Posterior vena cava (tissue), 2 donors: ENCODE measurements at regions of chr13 and their contacts with region 1.

Region 1: DNA sequence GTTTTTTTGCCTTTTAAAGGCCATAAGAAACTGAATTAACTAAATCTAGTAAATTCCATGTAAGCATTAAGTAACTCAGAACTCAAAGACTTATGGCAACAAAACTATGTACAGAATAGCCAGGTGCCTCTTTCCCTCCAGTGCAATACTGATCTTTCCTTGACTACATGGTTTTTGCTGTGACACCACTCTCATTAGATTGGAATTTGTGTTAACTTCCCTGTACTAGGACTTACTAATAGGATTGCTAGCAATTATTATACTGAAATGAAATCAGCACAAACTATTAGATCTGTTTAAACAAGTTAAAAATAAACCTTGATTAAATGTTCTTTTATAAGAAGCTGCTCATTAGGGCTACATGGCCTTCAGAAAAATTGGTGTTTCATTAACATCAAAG is 96.3 kb downstream of the DACH1 start:
- DNase-seq: no peak

Region 2: GRCh38 chr13:71701741-71702140 is 69.0 kb before region 1 on chr13:
- intact Hi-C with region 1: loop called in 1 of 2 experiments (anchors 2 kb)
- DNase-seq: no peak

Region 3: DNA sequence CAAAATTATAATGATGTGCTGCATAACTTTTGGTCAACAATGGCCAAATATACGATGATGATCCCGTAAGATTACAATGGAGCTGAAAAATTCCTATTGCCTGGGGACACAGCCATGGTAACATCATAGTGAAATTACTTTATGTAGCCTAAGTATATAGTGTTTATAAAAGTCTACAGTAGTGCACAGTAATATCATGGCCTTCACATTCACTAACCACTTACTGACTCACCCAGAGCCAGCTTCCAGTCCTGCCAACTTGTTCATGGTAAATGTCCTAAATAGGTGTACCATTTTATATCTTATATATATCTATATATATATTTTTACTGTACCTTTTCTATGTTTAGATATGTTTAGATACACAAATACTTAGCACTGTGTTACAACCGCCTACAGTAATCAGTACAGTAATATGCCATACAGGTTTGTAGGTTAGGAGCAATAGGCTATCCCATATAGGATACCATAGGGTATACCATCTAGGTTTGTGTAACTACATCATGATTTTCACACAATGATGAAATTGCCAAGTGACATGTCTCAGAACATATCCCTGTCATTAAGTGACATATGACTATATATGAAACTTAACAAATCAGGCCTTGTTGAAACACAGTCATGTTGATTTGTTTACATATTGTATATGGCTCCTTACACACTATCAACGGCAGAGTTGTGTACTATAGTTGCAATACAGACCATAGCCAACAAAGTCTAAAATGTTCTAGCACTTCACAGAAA is 987.3 kb after region 1 on chr13:
- intact Hi-C with region 1: no loop called
- DNase-seq: no peak